Activated CD8-positive, alpha-beta T cell treated with anti-CD3 and anti-CD28 coated beads, Interleukin-2, amount 10 ng/mL, durations not matched to agents 7 days and 5 days (primary cell): ENCODE measurements at regions of chr5 and their contacts with region 1.

Region 1: DNA sequence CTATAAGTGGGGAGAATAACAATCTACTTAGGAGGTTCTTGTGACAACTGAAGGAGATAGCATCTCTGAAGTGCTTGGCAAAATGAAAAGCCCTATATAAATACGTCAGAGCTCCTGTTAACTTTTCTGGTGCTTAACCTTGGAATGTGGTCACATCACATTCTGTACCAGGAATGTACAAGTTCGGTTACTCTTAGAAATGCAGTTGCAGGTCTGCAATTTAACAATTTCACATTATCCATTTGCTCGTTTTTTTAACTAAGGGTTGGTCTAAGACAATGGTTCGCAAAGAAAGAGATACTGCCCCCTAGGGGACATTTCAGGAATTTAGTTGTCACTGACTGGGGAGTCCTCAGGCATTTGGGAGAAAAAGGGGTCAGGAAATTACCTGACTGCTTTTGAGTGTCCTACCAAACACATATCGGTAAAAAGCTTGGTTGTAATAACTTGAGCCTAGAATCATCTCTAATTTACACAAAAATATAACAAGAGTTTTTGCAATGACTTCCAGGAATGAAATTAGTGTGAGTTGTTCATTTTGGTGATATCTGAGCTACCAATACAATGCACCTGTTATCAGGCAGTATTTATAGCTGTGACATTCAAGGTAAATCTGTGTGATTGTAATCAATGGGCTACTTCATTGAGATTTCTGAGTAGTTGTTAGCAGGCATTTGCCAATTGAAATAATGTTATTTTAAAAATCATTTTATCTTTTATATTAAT is 5.4 kb upstream of the HBEGF start:
- DNase-seq: peak; percentile 84
- ATAC-seq: peak; percentile 84
- H3K4me3 Mint-ChIP-seq: no peak overlapping the region
- H3K27ac Mint-ChIP-seq: peak overlapping the region; percentile 10
- H3K4me1 Mint-ChIP-seq: peaks cover 29% of the 10 kb centered on the region
- H3K27me3 Mint-ChIP-seq: peaks cover 7% of the 10 kb centered on the region

Region 2: DNA sequence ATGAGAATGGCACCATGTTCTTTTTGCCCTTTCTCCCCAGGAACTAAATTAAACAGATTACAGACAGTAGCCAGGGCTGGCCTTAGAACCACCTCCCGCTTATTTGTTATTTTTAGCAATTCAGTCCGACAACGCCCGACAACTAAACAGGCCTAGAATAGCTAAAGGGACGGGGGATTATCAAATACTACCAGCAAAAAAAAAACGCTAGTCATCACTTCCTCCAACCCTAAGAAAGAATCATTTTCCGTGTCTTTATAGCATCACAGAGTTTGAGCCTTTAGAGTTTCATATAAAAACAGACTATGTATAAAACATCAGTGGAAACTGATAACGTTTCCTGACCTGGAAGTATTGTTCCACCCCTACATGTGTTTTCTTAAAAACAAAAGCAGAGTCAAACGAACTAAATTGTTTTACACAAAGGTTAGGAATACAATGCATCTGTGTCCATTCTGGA is 84.2 kb before region 1 on chr5:
- CTCF ChIA-PET with region 1: interaction called, 796 read pairs
- POLR2A ChIA-PET with region 1: no interaction called
- DNase-seq: no peak
- ATAC-seq: no peak
- H3K4me3 Mint-ChIP-seq: no peak overlapping the region
- H3K27ac Mint-ChIP-seq: peak overlapping the region; percentile 13
- H3K4me1 Mint-ChIP-seq: peaks cover 33% of the 10 kb centered on the region
- H3K27me3 Mint-ChIP-seq: no peaks in the 10 kb centered on the region

Region 3: GRCh38 chr5:140302786-140303639 is 48.8 kb before region 1 on chr5 and contains the start of gene PFDN1:
- CTCF ChIA-PET with region 1: interaction called, 27 read pairs
- POLR2A ChIA-PET with region 1: interaction called, 15 read pairs
- DNase-seq: peak; percentile 97
- ATAC-seq: peak; percentile 100
- H3K4me3 Mint-ChIP-seq: peak within 1 kb of the TSS; percentile 92
- H3K27ac Mint-ChIP-seq: peak within 1 kb of the TSS; percentile 92
- H3K4me1 Mint-ChIP-seq: peaks cover 28% of the 10 kb centered on the region
- H3K27me3 Mint-ChIP-seq: peaks cover 9% of the 10 kb centered on the region
- total RNA-seq, gene PFDN1: 62.4 to 64.7 TPM

Region 4: DNA sequence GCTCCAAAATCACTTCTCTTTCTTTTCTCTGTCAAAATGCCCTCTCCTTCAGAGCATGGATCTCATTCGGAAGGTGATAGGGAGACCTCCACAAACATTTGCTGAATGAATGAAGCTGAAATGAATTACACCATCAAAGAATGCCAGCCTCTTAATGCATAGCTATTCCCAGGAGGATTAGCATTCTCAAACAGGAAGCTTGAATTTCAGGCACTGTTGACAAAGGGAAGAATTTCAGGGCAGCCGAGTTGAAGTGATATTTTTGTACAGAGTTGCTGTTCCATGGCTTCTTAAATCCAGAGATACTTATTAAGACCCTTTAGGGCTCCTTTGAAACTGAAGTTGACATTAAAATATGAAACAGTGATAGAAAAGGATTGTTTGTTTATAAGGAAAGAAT is 24.2 kb before region 1 on chr5:
- CTCF ChIA-PET with region 1: interaction called, 18 read pairs
- POLR2A ChIA-PET with region 1: no interaction called
- DNase-seq: no peak
- ATAC-seq: no peak
- H3K4me3 Mint-ChIP-seq: no peak overlapping the region
- H3K27ac Mint-ChIP-seq: no peak overlapping the region
- H3K4me1 Mint-ChIP-seq: no peaks in the 10 kb centered on the region
- H3K27me3 Mint-ChIP-seq: peaks cover 6% of the 10 kb centered on the region

Region 5: GRCh38 chr5:140362860-140363630 is 11.3 kb after region 1 on chr5:
- CTCF ChIA-PET with region 1: interaction called, 28 read pairs
- POLR2A ChIA-PET with region 1: no interaction called
- DNase-seq: peak; percentile 89
- ATAC-seq: peak; percentile 94
- H3K4me3 Mint-ChIP-seq: peak overlapping the region; percentile 71
- H3K27ac Mint-ChIP-seq: peak overlapping the region; percentile 54
- H3K4me1 Mint-ChIP-seq: peaks cover 11% of the 10 kb centered on the region
- H3K27me3 Mint-ChIP-seq: peaks cover 7% of the 10 kb centered on the region

Region 6: GRCh38 chr5:140420226-140420570 is 68.4 kb after region 1 on chr5:
- CTCF ChIA-PET with region 1: no interaction called
- POLR2A ChIA-PET with region 1: no interaction called
- DNase-seq: no peak
- ATAC-seq: no peak
- H3K4me3 Mint-ChIP-seq: no peak overlapping the region
- H3K27ac Mint-ChIP-seq: peak overlapping the region; percentile 53
- H3K4me1 Mint-ChIP-seq: peaks cover 24% of the 10 kb centered on the region
- H3K27me3 Mint-ChIP-seq: no peaks in the 10 kb centered on the region